SK-N-SH (cell line): ENCODE measurements at regions of chr2 and their contacts with region 1.

Region 1: GRCh38 chr2:47323009-47323821 is 79.7 kb upstream of the MSH2 start:
- DNase-seq: peak; percentile 87
- H3K4me3 ChIP-seq: no peak overlapping the region; a peak in 1 of 4 replicates
- H3K27ac ChIP-seq: no peak overlapping the region
- H3K4me1 ChIP-seq: peaks cover 2 to 17% of the 10 kb centered on the region in 2 experiments; a peak in 1 of 4 replicates
- H3K27me3 ChIP-seq: no peaks in the 10 kb centered on the region
- CTCF ChIP-seq: peak; percentile 99
- EP300 ChIP-seq: no peak
- RAD21 ChIP-seq: peak; percentile 100

Region 2: GRCh38 chr2:46632349-46632748 is 690.9 kb before region 1 on chr2:
- CTCF ChIA-PET with region 1: interaction called, 10 read pairs
- POLR2A ChIA-PET with region 1: no interaction called
- DNase-seq: peak; percentile 56
- H3K4me3 ChIP-seq: no peak overlapping the region
- H3K27ac ChIP-seq: peak overlapping the region in 1 of 2 experiments; percentile 17; a peak in 1 of 4 replicates
- H3K4me1 ChIP-seq: no peaks in the 10 kb centered on the region
- H3K27me3 ChIP-seq: no peaks in the 10 kb centered on the region
- CTCF ChIP-seq: peak; percentile 87
- EP300 ChIP-seq: no peak
- RAD21 ChIP-seq: peak; percentile 92

Region 3: GRCh38 chr2:46909771-46910419 is 413.3 kb before region 1 on chr2:
- CTCF ChIA-PET with region 1: interaction called, 107 read pairs
- POLR2A ChIA-PET with region 1: no interaction called
- DNase-seq: no peak
- H3K4me3 ChIP-seq: no peak overlapping the region
- H3K27ac ChIP-seq: peak overlapping the region in 1 of 2 experiments; percentile 62; a peak in 2 of 4 replicates
- H3K4me1 ChIP-seq: peaks cover 14 to 26% of the 10 kb centered on the region in 2 experiments; a peak in 3 of 4 replicates
- H3K27me3 ChIP-seq: no peaks in the 10 kb centered on the region
- CTCF ChIP-seq: no peak
- EP300 ChIP-seq: no peak; a peak in 1 of 4 replicates
- RAD21 ChIP-seq: no peak

Region 4: DNA sequence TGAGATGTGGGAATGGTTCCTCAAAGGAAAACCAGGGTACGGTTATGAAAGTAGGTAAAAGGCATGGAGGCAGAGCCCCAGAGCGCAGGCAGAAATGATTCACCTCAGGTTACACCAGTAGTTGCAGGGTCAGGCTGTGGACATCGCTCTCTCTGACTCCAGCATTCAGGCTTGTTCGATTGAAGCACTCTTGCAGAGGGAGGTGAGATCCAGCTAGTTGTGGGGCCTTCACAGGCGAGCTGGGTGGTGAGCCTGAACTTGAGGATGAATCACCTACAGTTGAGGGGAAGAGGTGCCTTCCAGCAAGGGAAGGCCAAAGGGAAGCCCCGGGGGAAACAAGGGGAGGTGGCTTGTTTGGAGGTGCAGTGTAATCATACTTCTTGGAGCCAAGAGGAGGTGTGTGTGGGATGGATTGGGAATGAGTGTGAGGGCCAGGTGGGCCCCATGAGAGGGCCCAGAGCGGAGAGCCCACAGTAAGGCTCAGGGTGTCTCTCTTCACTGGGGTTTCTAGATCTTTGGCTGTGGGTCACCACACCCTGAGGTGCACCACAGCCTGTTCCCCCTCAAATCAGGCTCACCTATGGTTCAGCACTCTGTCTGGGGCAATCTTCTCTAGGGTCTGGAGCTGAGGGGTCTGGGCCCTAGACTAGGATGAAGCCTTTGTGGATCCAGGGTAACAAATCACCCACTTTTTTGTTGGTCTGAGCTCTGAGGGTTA is 359.1 kb before region 1 on chr2:
- CTCF ChIA-PET with region 1: interaction called, 14 read pairs
- POLR2A ChIA-PET with region 1: no interaction called
- DNase-seq: no peak
- H3K4me3 ChIP-seq: no peak overlapping the region
- H3K27ac ChIP-seq: peak overlapping the region in 1 of 2 experiments; percentile 54; a peak in 2 of 4 replicates
- H3K4me1 ChIP-seq: peaks cover 8 to 35% of the 10 kb centered on the region in 2 experiments; a peak in 3 of 4 replicates
- H3K27me3 ChIP-seq: no peaks in the 10 kb centered on the region
- CTCF ChIP-seq: no peak
- EP300 ChIP-seq: no peak
- RAD21 ChIP-seq: no peak

Region 5: DNA sequence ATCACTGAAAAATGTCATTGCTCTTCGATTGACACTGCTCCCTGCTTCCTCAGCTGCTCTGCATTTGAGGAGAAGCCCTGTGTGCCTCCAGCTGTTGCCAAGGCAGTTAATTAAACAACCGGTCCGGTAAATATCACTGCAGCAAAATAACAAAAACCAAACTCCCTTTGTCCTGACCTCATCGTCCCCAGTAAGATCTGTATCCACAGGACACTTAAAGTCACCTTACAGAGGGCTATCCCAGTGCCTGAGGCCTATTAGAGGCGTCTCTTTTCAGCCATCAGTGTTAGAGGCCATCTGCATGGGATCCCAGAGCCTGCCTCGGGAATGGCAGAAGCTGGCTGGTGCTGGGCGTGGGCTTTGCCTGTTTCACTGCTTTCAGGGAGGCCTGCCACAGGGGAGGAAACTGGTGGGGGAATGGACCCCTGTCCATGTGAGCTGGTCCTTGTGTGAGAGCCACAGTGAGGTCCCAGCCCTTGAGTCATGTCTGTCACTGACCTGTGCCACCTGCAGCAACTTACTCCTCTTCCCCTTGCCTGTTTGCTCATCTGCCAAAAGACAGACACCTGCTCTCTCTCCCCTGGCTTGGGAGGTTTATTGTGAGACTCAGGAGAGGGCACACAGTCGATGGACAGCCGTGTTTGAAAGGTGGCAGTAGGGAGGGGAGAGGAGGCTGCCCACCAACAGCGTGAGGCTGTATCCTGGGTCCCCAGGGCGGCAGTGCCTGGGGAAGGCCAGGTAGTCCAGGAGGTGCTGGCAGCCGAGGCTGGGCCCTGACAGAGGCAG is 289.9 kb before region 1 on chr2:
- CTCF ChIA-PET with region 1: interaction called, 15 read pairs
- POLR2A ChIA-PET with region 1: no interaction called
- DNase-seq: peak; percentile 79
- H3K4me3 ChIP-seq: no peak overlapping the region
- H3K27ac ChIP-seq: peak overlapping the region; percentile 100
- H3K4me1 ChIP-seq: peaks cover 41 to 74% of the 10 kb centered on the region in 2 experiments
- H3K27me3 ChIP-seq: no peaks in the 10 kb centered on the region
- CTCF ChIP-seq: no peak
- EP300 ChIP-seq: peak in 1 of 2 experiments; percentile 82; a peak in 1 of 4 replicates
- RAD21 ChIP-seq: peak; percentile 25; the same call in 1 of the 2 replicates

Region 6: DNA sequence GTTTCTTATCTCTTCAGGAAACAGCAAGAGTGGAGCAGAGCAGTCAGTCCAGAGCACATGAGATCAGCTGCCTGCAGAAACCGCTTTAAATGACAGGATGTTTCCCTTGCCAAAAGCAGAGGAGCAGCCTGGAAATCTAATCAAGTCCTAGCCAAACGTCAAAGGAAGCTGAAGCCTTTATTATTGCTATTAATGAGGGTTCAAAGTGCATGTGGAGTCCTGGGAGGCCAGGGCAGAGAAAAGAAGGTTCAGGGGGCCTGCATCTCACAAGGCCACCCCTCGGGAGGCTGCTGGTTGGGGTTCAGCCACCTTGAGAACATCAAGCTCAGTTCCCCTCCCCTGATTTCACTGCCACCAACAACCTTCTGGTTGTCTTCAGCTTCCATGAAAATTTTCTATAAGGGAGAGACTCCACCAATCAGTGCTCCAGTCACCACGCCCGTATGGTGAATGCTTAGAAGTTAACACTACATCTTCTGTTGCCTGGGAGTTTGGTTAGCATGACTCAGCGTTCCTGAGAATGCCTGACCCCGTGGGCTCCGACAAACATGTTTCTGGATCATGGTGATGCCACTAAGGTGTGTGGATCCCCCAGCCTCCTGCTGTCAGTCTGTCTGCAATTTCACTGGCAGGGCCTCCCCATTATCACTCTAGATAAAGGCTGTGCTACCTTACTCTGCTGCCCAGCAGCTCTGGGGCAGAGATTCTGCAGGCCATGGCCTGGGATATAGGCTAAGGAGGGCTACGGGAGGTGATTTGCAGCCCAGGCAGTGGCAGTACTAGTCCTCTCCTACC is 234.3 kb before region 1 on chr2:
- CTCF ChIA-PET with region 1: interaction called, 30 read pairs
- POLR2A ChIA-PET with region 1: interaction called, 3 read pairs
- DNase-seq: peak; percentile 87
- H3K4me3 ChIP-seq: no peak overlapping the region
- H3K27ac ChIP-seq: peak overlapping the region; percentile 77 to 100
- H3K4me1 ChIP-seq: peaks cover 18 to 85% of the 10 kb centered on the region in 2 experiments
- H3K27me3 ChIP-seq: no peaks in the 10 kb centered on the region
- CTCF ChIP-seq: 0 out of 2 replicates have a peak, but pooled peaks have one; percentile 5
- EP300 ChIP-seq: peak in 1 of 2 experiments; percentile 100; a peak in 2 of 4 replicates
- RAD21 ChIP-seq: peak; percentile 0; the same call in 1 of the 2 replicates

Region 7: GRCh38 chr2:47309952-47310800 is 13.0 kb before region 1 on chr2:
- CTCF ChIA-PET with region 1: interaction called, 44 read pairs
- POLR2A ChIA-PET with region 1: no interaction called
- DNase-seq: no peak
- H3K4me3 ChIP-seq: no peak overlapping the region
- H3K27ac ChIP-seq: peak overlapping the region in 1 of 2 experiments; percentile 87; a peak in 1 of 4 replicates
- H3K4me1 ChIP-seq: peaks cover 0 to 38% of the 10 kb centered on the region in 2 experiments; a peak in 3 of 4 replicates
- H3K27me3 ChIP-seq: no peaks in the 10 kb centered on the region
- CTCF ChIP-seq: no peak
- EP300 ChIP-seq: no peak
- RAD21 ChIP-seq: no peak